ENCODE measurements at regions of chr11 and their contacts with region 1.

Region 1: GRCh38 chr11:45846974-45847910 is at the start of gene CRY2:
- DNase-seq: peak; percentile 88 to 100
- H3K4me3 ChIP-seq: peak within 1 kb of the TSS; percentile 91
- H3K27ac ChIP-seq: peak within 1 kb of the TSS; percentile 30; the same call in 1 of the 2 replicates
- H3K4me1 ChIP-seq: peaks cover 18% of the 10 kb centered on the region
- H3K27me3 ChIP-seq: no peaks in the 10 kb centered on the region
- CTCF ChIP-seq: no peak
- total RNA-seq, gene CRY2: 17.5 and 27.3 TPM in 2 replicates

Region 2: GRCh38 chr11:45468262-45468856 is 378.9 kb before region 1 on chr11:
- CTCF ChIA-PET with region 1: no interaction called
- POLR2A ChIA-PET with region 1: no interaction called
- intact Hi-C with region 1: no loop called
- DNase-seq: no peak
- H3K4me3 ChIP-seq: no peak overlapping the region
- H3K27ac ChIP-seq: no peak overlapping the region
- H3K4me1 ChIP-seq: no peaks in the 10 kb centered on the region
- H3K27me3 ChIP-seq: peaks cover 69% of the 10 kb centered on the region
- CTCF ChIP-seq: no peak

Region 3: DNA sequence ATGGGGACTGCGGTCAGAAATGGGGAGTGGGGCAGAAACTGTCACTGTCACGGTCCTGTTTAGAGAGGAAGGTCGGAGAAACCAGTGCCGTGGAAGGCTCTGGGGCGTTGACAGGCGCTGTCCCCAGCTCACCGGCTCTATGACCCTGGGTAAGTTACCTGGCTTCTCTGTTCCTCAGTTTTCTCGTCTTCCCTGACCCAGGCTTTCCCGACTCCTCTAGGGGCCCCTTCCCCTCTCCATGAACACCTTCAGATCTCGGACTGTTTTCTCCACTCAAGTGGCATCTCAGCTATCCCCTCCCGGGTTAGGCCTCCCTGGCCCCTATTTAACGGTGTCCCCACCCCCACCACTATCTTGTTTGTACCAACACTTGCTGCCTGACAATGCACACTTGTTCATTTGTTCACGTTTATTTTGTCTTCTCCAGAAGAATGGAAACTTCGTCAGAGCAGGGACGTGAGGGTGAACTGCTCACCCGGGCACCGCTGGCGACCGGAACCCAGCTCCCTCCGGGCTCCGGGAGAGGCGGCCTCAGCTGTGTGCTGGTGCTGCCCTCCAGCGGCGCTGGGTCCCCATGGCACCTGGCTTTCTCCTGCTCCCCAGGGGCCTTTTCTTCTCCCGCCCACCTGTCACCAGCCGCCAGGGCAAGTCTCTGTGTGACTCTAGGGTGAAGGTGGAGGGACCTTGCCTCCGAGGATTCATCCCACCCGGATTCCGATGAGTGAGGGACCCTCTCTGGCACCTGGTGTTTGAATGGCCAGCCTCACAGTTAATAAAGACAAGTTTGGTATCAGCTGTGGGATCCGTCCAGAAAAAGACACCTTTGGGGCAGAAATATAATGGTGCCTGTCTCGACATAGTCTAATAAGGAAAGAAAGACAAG is 75.4 kb before region 1 on chr11:
- CTCF ChIA-PET with region 1: interaction called, 3 read pairs
- POLR2A ChIA-PET with region 1: no interaction called
- intact Hi-C with region 1: loop called (anchors 2 kb)
- DNase-seq: peak; percentile 59 to 83
- H3K4me3 ChIP-seq: peak overlapping the region; percentile 57
- H3K27ac ChIP-seq: no peak overlapping the region
- H3K4me1 ChIP-seq: no peaks in the 10 kb centered on the region
- H3K27me3 ChIP-seq: peaks cover 78% of the 10 kb centered on the region
- CTCF ChIP-seq: peak; percentile 89

Region 4: DNA sequence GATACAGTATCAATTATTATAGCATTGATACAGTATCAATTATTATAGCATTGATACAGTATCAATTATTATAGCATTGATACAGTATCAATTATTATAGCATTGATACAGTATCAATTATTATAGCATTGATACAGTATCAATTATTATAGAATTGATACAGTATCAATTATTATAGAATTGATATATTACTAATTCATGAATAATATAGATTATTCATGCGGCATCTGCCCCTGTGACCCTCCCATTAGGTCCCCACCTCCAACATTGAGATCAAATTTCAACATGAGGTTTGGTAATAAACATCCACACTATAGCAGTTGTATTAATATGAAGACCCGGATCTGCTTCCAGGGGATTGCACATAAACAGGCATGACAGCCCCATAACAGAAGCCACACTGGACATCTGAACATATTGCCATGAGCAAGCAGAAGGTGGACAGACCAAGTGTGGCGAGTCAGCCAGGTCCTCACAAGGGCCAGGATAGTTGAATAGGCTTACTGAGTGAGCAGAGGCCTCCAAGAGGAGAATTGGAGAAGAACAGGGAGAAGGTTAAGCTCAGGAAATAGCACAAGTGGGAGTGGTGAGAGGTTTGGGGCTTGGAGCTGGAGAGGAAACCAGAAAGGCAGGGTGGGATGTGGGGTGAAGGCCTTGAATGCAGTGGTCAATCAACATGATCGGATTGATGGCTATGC is 31.6 kb before region 1 on chr11:
- CTCF ChIA-PET with region 1: no interaction called
- POLR2A ChIA-PET with region 1: interaction called, 18 read pairs
- intact Hi-C with region 1: no loop called
- DNase-seq: peak; percentile 41 to 68
- H3K4me3 ChIP-seq: no peak overlapping the region
- H3K27ac ChIP-seq: no peak overlapping the region
- H3K4me1 ChIP-seq: no peaks in the 10 kb centered on the region
- H3K27me3 ChIP-seq: no peaks in the 10 kb centered on the region
- CTCF ChIP-seq: peak; percentile 49; the same call in 1 of the 2 replicates

Region 5: GRCh38 chr11:45930031-45930794 is 83.0 kb after region 1 on chr11:
- CTCF ChIA-PET with region 1: no interaction called
- POLR2A ChIA-PET with region 1: no interaction called
- intact Hi-C with region 1: no loop called
- DNase-seq: peak in 1 of 2 experiments; percentile 40
- H3K4me3 ChIP-seq: no peak overlapping the region
- H3K27ac ChIP-seq: no peak overlapping the region
- H3K4me1 ChIP-seq: 0 out of 2 replicates have a peak, but pooled peaks cover 4% of the 10 kb centered on the region
- H3K27me3 ChIP-seq: no peaks in the 10 kb centered on the region
- CTCF ChIP-seq: no peak

Region 6: GRCh38 chr11:46006418-46007070 is 159.3 kb after region 1 on chr11:
- CTCF ChIA-PET with region 1: no interaction called
- POLR2A ChIA-PET with region 1: no interaction called
- intact Hi-C with region 1: loop called (anchors 2 kb)
- DNase-seq: peak; percentile 10 to 67
- H3K4me3 ChIP-seq: no peak overlapping the region
- H3K27ac ChIP-seq: no peak overlapping the region
- H3K4me1 ChIP-seq: no peaks in the 10 kb centered on the region
- H3K27me3 ChIP-seq: no peaks in the 10 kb centered on the region
- CTCF ChIP-seq: peak; percentile 90

Region 7: DNA sequence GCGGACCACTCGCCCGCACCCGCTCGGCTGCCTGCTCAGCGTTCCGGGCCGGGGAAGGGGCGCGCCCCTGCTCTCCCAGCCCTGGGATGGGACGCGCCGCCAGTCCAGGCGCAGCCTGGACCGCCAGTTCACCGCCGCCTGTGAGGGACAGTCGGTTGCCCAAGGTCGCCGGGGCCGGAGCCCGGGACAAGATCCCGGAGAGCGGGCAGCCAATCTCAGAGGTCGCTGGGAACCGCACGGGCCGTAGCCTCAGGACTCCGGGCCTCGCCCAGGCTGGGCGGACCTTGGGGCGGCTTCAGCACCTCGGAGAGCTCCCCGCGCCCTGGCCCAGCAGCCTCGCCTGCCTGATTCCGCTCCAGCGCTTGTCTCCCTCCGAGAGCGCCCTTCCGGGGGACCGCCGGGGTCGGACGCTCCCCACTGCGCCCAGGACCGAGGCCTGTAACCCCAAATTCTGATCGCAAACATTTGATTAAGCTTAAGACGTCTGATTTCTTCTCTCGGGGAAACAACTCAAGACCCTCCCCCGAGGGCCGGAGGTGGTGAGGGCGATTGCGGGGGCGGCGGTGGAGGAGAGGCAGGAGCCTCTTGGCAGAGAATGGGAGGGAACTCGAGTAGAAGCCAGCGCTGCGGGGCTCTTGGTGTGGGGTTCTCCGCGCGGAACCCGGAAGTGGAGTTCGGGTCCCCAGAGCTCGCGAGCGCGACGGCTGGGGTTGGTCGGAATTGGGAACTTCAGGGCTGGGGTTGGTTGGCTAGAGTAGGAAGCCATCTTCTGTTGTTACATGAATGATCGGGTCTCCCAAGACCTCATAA is 545.4 kb after region 1 on chr11:
- CTCF ChIA-PET with region 1: no interaction called
- POLR2A ChIA-PET with region 1: no interaction called
- intact Hi-C with region 1: loop called (anchors 1 kb)
- DNase-seq: peak; percentile 66 to 86
- H3K4me3 ChIP-seq: no peak overlapping the region
- H3K27ac ChIP-seq: no peak overlapping the region
- H3K4me1 ChIP-seq: 0 out of 2 replicates have a peak, but pooled peaks cover 4% of the 10 kb centered on the region
- H3K27me3 ChIP-seq: peaks cover 22% of the 10 kb centered on the region
- CTCF ChIP-seq: no peak